Mammary epithelial cell (primary cell): ENCODE measurements at regions of chr12 and their contacts with region 1.

Region 1: DNA sequence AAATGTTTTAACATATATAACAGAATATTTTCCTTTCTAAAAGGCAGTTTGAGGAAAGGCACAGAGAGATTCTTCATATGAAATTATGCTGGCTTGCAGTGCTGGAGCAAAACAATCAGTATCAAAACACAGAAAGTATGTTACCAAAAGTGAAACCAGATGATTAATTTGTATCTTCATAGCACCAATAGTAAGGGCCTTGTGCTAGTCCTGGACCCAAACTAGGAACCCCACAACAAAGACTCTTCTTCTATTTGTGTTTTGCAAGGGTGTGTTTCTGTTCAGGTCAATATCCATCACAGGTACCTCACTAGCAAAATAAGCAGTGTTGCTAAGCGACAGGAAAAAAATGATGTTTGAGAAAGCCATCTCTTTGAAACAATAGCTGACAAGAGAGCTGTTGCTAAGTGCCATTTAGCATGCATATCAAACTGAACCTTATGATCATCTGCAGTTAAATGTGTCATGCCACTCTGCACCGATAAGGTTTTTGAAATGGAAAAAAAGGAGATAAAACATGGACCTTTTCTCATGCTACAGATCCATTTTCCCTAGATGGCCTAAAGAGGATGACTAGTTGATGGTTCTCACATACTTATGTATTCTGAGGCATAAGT is 196.2 kb upstream of the ALG10 start:
- DNase-seq: peak; percentile 14
- H3K4me3 ChIP-seq: no peak overlapping the region
- H3K27ac ChIP-seq: no peak overlapping the region
- H3K4me1 ChIP-seq: peaks cover 9% of the 10 kb centered on the region
- H3K27me3 ChIP-seq: no peaks in the 10 kb centered on the region
- CTCF ChIP-seq: no peak

Region 2: GRCh38 chr12:33628093-33628492 is 198.0 kb before region 1 on chr12:
- CTCF ChIA-PET with region 1: interaction called, 6 read pairs
- dilution Hi-C with region 1: no loop called
- in situ Hi-C with region 1: no loop called
- intact Hi-C with region 1: loop called (anchors 1 kb)
- DNase-seq: peak; percentile 14
- H3K4me3 ChIP-seq: no peak overlapping the region
- H3K27ac ChIP-seq: no peak overlapping the region
- H3K4me1 ChIP-seq: no peaks in the 10 kb centered on the region
- H3K27me3 ChIP-seq: no peaks in the 10 kb centered on the region
- CTCF ChIP-seq: peak; percentile 16 to 49

Region 3: GRCh38 chr12:33752854-33753253 is 73.2 kb before region 1 on chr12:
- CTCF ChIA-PET with region 1: no interaction called
- dilution Hi-C with region 1: no loop called
- in situ Hi-C with region 1: no loop called
- intact Hi-C with region 1: no loop called
- DNase-seq: peak; percentile 71
- H3K4me3 ChIP-seq: no peak overlapping the region
- H3K27ac ChIP-seq: no peak overlapping the region
- H3K4me1 ChIP-seq: no peaks in the 10 kb centered on the region
- H3K27me3 ChIP-seq: peaks cover 6% of the 10 kb centered on the region
- CTCF ChIP-seq: no peak

Region 4: GRCh38 chr12:33765614-33766013 is 60.5 kb before region 1 on chr12:
- CTCF ChIA-PET with region 1: no interaction called
- dilution Hi-C with region 1: no loop called
- in situ Hi-C with region 1: loop called in 1 of 2 experiments (anchors 10 kb)
- intact Hi-C with region 1: no loop called
- DNase-seq: no peak
- H3K4me3 ChIP-seq: no peak overlapping the region
- H3K27ac ChIP-seq: no peak overlapping the region
- H3K4me1 ChIP-seq: no peaks in the 10 kb centered on the region
- H3K27me3 ChIP-seq: no peaks in the 10 kb centered on the region
- CTCF ChIP-seq: no peak